Lower leg skin (tissue), 4 donors: ENCODE measurements at regions of chr19 and their contacts with region 1.

Region 1: DNA sequence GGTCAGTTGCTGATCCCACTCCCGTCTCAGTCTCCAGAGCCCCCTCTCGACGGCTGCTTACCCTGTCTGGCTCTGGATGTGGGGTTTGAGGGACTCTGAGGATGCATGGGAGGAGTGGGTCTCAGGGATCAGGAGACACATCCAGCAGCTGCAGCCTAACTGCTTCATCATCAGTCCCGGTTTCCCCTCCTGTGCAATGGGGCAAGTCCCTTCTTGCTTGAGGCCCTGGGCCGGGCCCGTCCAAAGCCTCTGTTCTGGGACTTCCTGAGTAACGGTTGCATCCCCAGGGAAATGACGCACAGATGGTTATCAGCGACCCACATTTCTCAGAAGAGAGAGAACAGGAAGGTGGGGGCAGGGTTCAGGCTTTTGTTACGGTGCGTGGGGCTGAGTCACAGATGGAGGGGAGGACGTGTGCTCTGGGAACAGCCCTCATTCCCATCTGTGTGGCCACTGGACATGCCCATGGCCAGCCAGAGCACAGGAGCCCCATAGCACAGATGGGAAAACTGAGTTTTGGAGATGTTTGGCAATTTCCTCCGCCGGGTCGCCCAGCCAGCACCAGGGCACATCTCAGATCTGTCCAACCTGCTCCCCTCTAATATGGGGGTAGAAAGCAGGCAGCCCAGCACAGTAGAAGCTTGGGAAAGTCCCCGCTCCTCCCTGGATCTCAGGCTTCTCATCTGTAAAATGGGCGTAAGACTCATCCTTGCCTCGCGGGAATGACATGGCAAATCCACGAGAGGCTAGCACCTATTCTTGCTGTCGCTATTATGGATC is 19.3 kb downstream of the GNA15 start:
- DNase-seq: peak; percentile 82 to 94
- H3K4me3 ChIP-seq: no peak overlapping the region
- CTCF ChIP-seq: no peak
- POLR2A ChIP-seq: no peak

Region 2: GRCh38 chr19:2950286-2951124 is 204.6 kb before region 1 on chr19:
- intact Hi-C with region 1: loop called (anchors 10 kb)
- DNase-seq: peak; percentile 100
- H3K4me3 ChIP-seq: peak overlapping the region; percentile 74
- CTCF ChIP-seq: no peak
- POLR2A ChIP-seq: peak in 1 of 2 donors; percentile 39

Region 3: DNA sequence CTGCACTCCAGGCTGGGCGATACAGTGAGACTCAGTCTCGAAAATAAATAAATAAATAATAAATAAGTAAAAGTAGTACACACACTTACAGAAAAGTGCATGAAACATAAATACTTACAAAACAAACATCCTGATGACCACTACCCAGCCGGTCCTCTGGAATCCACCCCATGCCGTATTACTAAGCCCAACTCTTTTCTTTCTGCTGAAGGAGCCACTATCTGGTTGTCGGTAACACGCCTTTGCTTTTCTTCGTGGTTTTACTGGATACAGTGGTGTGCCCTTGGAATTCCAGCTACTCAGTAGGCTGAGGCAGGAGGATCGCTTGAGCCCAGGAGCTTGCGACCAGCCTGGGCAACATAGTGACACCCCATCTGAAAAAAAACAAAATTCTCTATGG is 108.7 kb after region 1 on chr19:
- intact Hi-C with region 1: no loop called
- DNase-seq: no peak
- H3K4me3 ChIP-seq: no peak overlapping the region
- CTCF ChIP-seq: no peak
- POLR2A ChIP-seq: no peak